B cell (primary cell): ENCODE measurements at regions of chr4 and their contacts with region 1.

Region 1: GRCh38 chr4:112515304-112516067 is 494 bp downstream of the NEUROG2 start:
- DNase-seq: peak; percentile 75
- ATAC-seq: peak; percentile 48
- H3K4me3 ChIP-seq: peak overlapping the region; percentile 35 to 75 (median 60)
- H3K4me3 Mint-ChIP-seq: peak overlapping the region; percentile 96
- H3K27ac ChIP-seq: no peak overlapping the region
- H3K27ac Mint-ChIP-seq: peak overlapping the region; percentile 66
- H3K4me1 ChIP-seq: peaks cover 51 to 76% of the 10 kb centered on the region in 2 donors
- H3K4me1 Mint-ChIP-seq: peaks cover 56% of the 10 kb centered on the region
- H3K27me3 ChIP-seq: peaks cover 4 to 85% (median 80%) of the 10 kb centered on the region in 4 experiments
- H3K27me3 Mint-ChIP-seq: peaks cover 91% of the 10 kb centered on the region
- CTCF ChIP-seq: no peak

Region 2: DNA sequence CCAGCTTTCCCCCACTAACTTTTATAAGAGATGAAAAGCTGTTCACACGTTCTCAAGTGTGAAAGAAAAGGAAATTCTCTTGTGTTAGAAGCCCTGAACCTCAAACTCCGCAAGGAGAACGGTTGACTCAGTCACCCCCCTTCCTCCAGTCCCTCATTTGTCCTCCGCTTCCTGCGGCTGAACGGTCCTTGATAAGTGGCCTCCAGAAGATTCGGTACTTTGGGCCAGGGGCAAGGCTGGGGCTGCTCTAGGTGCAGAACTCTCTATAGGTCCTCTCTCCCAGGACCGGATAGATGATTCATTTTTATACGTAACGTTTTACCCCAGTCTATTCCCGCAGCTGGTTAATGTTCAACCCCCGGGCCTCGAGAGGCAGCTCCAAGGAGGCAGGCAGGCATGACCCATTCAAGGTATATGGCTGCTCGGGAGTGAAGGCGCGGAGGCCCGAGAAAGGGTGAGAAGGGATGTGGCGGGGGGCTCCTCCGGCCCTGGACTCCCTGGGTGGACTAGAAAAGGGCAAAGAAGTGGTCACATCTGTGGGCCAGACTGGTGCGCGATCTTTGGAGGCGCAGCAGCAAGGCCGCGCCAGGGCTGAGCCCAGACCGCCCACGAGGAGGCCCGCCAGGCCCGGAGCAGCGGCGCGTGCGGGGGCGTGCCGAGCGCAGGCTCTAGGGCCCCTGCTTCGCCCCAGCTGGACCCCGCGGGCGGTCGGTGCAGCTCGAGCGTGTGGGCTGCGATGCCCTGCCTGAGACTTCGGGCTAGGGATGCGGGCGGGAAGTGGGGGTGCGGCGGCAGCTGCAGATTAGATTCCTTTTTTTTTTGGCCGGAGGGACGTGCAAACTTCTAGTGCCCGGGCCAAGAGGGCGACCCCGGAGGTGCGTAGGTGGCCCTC is 1904.3 kb before region 1 on chr4:
- CTCF ChIA-PET with region 1: no interaction called
- POLR2A ChIA-PET with region 1: no interaction called
- intact Hi-C with region 1: loop called (anchors 10 kb)
- DNase-seq: no peak
- ATAC-seq: no peak
- H3K4me3 ChIP-seq: no peak overlapping the region
- H3K4me3 Mint-ChIP-seq: no peak overlapping the region
- H3K27ac ChIP-seq: no peak overlapping the region
- H3K27ac Mint-ChIP-seq: no peak overlapping the region
- H3K4me1 ChIP-seq: peaks cover 0 to 7% of the 10 kb centered on the region in 2 donors
- H3K4me1 Mint-ChIP-seq: no peaks in the 10 kb centered on the region
- H3K27me3 ChIP-seq: peaks cover 0 to 61% (median 52%) of the 10 kb centered on the region in 4 experiments
- H3K27me3 Mint-ChIP-seq: peaks cover 54% of the 10 kb centered on the region
- CTCF ChIP-seq: no peak

Region 3: GRCh38 chr4:112127803-112128202 is 387.7 kb before region 1 on chr4:
- CTCF ChIA-PET with region 1: no interaction called
- POLR2A ChIA-PET with region 1: no interaction called
- intact Hi-C with region 1: no loop called
- DNase-seq: no peak
- ATAC-seq: no peak
- H3K4me3 ChIP-seq: no peak overlapping the region
- H3K4me3 Mint-ChIP-seq: no peak overlapping the region
- H3K27ac ChIP-seq: no peak overlapping the region
- H3K27ac Mint-ChIP-seq: no peak overlapping the region
- H3K4me1 ChIP-seq: no peaks in the 10 kb centered on the region
- H3K4me1 Mint-ChIP-seq: peaks cover 2% of the 10 kb centered on the region
- H3K27me3 ChIP-seq: no peaks in the 10 kb centered on the region
- H3K27me3 Mint-ChIP-seq: peaks cover 3% of the 10 kb centered on the region
- CTCF ChIP-seq: no peak

Region 4: GRCh38 chr4:112704991-112705845 is 189.7 kb after region 1 on chr4:
- CTCF ChIA-PET with region 1: no interaction called
- POLR2A ChIA-PET with region 1: no interaction called
- intact Hi-C with region 1: loop called (anchors 10 kb)
- DNase-seq: peak; percentile 32
- ATAC-seq: no peak
- H3K4me3 ChIP-seq: peak overlapping the region in 3 of 5 experiments; percentile 44 to 51 (median 49)
- H3K4me3 Mint-ChIP-seq: peak overlapping the region; percentile 90
- H3K27ac ChIP-seq: no peak overlapping the region
- H3K27ac Mint-ChIP-seq: no peak overlapping the region
- H3K4me1 ChIP-seq: peaks cover 16 to 20% of the 10 kb centered on the region in 2 donors
- H3K4me1 Mint-ChIP-seq: peaks cover 22% of the 10 kb centered on the region
- H3K27me3 ChIP-seq: peaks cover 2 to 32% (median 32%) of the 10 kb centered on the region in 4 experiments
- H3K27me3 Mint-ChIP-seq: peaks cover 60% of the 10 kb centered on the region
- CTCF ChIP-seq: no peak